ENCODE measurements at regions of chr9 and their contacts with region 1.

Region 1: GRCh38 chr9:83937911-83938323 is 16.7 kb upstream of the KIF27 start:
- DNase-seq: peak; percentile 35 to 66
- H3K4me3 ChIP-seq: no peak overlapping the region
- H3K4me1 ChIP-seq: peaks cover 6% of the 10 kb centered on the region
- H3K27me3 ChIP-seq: no peaks in the 10 kb centered on the region

Region 2: DNA sequence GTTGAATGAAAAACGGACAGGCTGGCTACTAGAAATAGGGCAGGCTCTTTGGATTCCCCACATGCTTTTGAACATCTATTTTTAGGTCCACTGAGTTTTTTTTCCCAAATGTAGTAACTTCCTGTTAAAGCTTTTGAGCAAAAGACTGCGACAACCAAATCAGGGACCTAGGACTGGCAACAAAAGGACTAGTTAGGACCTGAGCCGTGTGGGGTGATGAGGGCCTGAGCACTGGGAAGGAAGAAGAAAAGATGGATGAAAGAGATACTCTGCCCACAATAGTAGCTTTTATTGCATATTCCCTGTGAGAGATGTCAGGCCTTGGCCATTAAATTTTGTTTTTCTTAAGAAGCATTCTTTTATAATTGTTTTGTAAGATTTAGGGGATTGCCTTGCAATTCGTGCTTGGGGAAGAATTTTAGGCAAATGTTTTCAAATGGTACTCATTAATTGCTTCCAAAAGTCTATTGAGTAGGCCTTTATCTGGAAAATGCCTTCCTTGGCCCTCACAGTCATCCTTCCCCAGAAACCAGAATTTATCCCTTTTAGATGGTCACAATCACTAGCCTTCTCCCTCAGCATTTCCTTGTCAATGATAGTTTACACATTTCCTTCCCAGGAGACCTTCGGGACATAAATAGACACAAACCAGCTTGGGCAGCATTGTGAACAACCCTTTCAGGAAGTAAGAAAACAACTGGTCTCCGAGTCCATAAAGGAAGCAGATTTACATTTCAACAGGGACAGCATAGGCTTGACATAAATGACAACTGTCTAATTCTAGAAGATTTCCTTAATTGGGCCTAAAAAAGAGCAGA is 209.2 kb after region 1 on chr9:
- in situ Hi-C with region 1: no loop called
- DNase-seq: peak; percentile 55 to 86
- H3K4me3 ChIP-seq: no peak overlapping the region
- H3K4me1 ChIP-seq: peaks cover 28% of the 10 kb centered on the region
- H3K27me3 ChIP-seq: no peaks in the 10 kb centered on the region

Region 3: GRCh38 chr9:84261082-84261746 is 323.3 kb after region 1 on chr9:
- in situ Hi-C with region 1: loop called (anchors 5 kb)
- DNase-seq: peak; percentile 76 to 88
- H3K4me3 ChIP-seq: no peak overlapping the region
- H3K4me1 ChIP-seq: no peaks in the 10 kb centered on the region
- H3K27me3 ChIP-seq: peaks cover 25% of the 10 kb centered on the region

Region 4: GRCh38 chr9:84315278-84315877 is 377.5 kb after region 1 on chr9:
- in situ Hi-C with region 1: loop called (anchors 5 kb)
- DNase-seq: peak; percentile 65 to 74
- H3K4me3 ChIP-seq: no peak overlapping the region
- H3K4me1 ChIP-seq: peaks cover 2% of the 10 kb centered on the region; the same call in 1 of the 2 replicates
- H3K27me3 ChIP-seq: peaks cover 9% of the 10 kb centered on the region

Measured in HAP-1 (cell line).